Activated naive CD4-positive, alpha-beta T cell treated with anti-CD3 and anti-CD28 coated beads for 36 hours (primary cell): ENCODE measurements at regions of chr3 and their contacts with region 1.

Region 1: GRCh38 chr3:49939858-49940666 is at the start of gene RBM6:
- DNase-seq: peak; percentile 98
- H3K4me3 Mint-ChIP-seq: peak within 1 kb of the TSS; percentile 98
- H3K27ac Mint-ChIP-seq: peak within 1 kb of the TSS; percentile 93
- H3K4me1 Mint-ChIP-seq: peaks cover 29% of the 10 kb centered on the region
- H3K27me3 Mint-ChIP-seq: no peaks in the 10 kb centered on the region
- total RNA-seq, gene RBM6: 89.1 to 98.2 TPM

Region 2: DNA sequence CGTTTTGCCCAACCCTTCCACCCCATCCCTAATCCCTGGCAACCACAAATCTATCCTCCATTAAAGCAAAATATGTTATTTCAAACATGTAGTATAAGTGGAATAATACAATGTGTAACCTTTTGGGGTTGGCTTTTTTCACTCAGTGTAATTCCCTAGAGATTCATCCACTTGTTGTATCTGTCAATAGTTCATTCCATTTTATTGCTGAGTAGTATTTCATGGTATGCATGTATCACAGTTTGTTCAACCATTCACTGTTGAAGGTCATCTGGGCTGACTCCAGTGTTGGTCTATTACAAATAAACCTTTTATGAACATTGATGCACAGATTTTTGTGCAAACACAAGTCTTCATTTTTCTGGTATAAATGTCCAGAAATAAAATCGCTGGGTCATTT is 347.0 kb before region 1 on chr3:
- CTCF ChIA-PET with region 1: no interaction called
- intact Hi-C with region 1: no loop called
- DNase-seq: no peak
- H3K4me3 Mint-ChIP-seq: no peak overlapping the region
- H3K27ac Mint-ChIP-seq: no peak overlapping the region
- H3K4me1 Mint-ChIP-seq: no peaks in the 10 kb centered on the region
- H3K27me3 Mint-ChIP-seq: no peaks in the 10 kb centered on the region

Region 3: GRCh38 chr3:49856181-49857005 is 83.7 kb before region 1 on chr3 and contains the start of gene TRAIP:
- CTCF ChIA-PET with region 1: no interaction called
- intact Hi-C with region 1: loop called (anchors 1 kb)
- DNase-seq: peak; percentile 97
- H3K4me3 Mint-ChIP-seq: peak within 1 kb of the TSS; percentile 94
- H3K27ac Mint-ChIP-seq: peak within 1 kb of the TSS; percentile 65
- H3K4me1 Mint-ChIP-seq: peaks cover 13% of the 10 kb centered on the region
- H3K27me3 Mint-ChIP-seq: no peaks in the 10 kb centered on the region
- total RNA-seq, gene TRAIP: 21.5 to 25.7 TPM

Region 4: DNA sequence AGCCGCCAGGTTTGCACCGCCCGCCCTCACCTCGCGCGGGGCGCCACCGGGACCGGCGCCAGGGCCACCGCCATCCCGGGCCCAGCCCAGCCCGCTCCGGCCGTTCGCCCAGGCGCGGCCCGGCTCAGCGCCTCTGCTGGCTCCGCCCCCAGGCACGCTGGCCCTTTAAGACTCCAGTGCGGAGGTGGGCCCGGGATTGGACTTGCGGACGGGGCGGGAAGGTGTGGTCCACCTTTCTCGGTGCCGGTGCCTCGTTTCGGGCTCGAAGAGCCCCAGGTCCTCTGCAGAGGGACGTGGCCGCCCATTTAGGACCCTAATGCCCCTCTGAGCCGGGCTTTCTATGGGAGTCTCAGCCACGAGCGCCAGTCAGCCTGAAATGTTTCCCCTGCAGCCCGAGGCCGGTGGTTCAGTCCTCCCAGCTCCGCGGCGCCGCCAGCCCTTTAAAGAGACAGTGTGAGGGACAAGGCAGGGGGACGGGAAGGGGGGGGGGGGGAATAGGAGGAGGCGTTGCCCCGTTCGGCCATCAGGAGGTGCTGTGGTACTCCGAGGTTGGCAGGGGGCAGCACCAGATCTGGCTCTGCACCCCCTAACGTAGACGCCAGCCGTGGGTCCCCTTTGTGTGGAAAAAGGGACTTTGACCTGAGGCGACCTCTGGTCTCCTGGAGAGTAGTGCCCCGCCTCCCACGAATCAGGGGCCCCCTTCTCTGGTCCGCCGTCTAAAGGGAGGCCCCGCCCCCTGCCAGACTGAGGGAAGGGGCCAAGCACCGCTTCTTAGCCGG is 381.5 kb after region 1 on chr3:
- CTCF ChIA-PET with region 1: no interaction called
- intact Hi-C with region 1: no loop called
- DNase-seq: peak; percentile 83
- H3K4me3 Mint-ChIP-seq: peak overlapping the region; percentile 86
- H3K27ac Mint-ChIP-seq: peak overlapping the region; percentile 80
- H3K4me1 Mint-ChIP-seq: peaks cover 38% of the 10 kb centered on the region
- H3K27me3 Mint-ChIP-seq: no peaks in the 10 kb centered on the region